ENCODE measurements at regions of chr7 and their contacts with region 1.

Region 1: DNA sequence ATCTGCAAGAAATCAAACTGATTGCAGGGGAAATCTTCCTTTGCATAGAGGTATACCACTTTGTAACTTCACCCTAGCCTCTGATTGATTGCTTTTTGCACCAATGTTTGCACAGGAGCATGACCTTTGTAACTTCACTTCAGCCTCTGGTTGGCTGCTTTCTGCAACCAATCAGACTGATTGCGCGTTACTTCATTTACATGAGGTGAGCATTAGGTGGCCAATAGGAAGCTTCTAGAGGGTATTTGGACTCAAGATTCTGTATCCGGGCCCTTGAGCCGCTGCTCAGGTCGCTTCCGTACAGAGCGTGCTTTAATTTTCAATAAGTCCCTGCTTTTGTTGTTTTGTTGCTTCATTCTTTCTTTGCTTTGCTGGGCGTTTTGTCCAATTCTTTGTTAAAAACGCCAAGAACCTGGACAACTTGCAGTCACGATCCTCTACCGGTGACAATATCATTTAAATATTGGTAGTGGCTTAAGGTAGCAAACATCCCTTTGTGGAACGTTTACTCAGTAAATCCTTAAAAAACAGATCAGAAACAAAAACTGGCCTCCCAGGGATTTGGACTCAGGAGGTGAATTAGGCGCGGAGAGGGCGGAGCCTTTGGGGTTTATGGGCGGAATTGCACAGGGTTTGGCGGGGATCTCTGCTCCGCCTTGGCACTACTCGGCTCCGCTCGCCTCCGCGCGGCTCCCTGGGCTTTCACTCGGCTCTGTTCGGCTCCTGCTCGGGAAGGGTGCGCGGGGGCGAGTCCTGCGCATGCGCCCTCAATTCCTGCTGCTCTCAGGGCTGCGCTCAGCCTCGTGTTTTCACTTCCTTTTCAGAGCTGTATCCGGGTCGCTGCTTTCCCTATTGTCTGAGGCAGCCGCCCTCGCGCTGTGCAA is at the start of gene PHF14:
- DNase-seq: peak; percentile 97
- ATAC-seq: peak; percentile 97
- H3K4me3 ChIP-seq: peak within 1 kb of the TSS; percentile 66 to 88 (median 85)
- H3K27ac ChIP-seq: peak within 1 kb of the TSS; percentile 99
- H3K4me1 ChIP-seq: peaks cover 42% of the 10 kb centered on the region
- H3K27me3 ChIP-seq: no peaks in the 10 kb centered on the region; a peak in 1 of 5 replicates
- CTCF ChIP-seq: no peak
- EP300 ChIP-seq: peak in 1 of 2 experiments; percentile 58; a peak in 2 of 4 replicates
- POLR2A ChIP-seq: peak; percentile 83 to 85
- RAD21 ChIP-seq: no peak
- total RNA-seq, gene PHF14: 68.7 and 70.9 TPM in 2 replicates

Region 2: GRCh38 chr7:10913457-10913856 is 59.8 kb before region 1 on chr7:
- CTCF ChIA-PET with region 1: no interaction called
- POLR2A ChIA-PET with region 1: no interaction called
- in situ Hi-C with region 1: no loop called
- intact Hi-C with region 1: no loop called
- DNase-seq: no peak
- ATAC-seq: no peak
- H3K4me3 ChIP-seq: no peak overlapping the region
- H3K27ac ChIP-seq: no peak overlapping the region
- H3K4me1 ChIP-seq: no peaks in the 10 kb centered on the region
- H3K27me3 ChIP-seq: no peaks in the 10 kb centered on the region
- CTCF ChIP-seq: no peak
- EP300 ChIP-seq: no peak
- POLR2A ChIP-seq: no peak
- RAD21 ChIP-seq: no peak

Region 3: DNA sequence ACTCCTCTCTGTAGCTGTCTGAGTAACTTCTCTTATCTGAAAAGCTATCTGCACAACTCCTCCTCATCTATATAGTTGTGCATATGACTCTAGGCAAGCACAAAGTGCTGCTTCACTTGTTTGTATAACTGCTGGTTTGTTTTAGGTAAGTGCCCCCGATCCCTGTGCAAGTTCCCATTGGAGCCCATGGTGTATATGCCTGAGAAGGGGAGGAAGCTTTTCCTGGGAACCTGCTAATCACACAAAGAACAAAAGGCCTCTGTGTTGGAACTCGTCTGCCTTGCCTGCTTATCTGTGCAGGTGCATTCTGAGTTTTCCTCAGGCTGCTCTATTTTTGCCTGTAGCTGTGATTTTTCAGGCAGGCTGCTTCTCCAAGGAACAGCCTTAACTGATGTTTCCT is 22.8 kb before region 1 on chr7:
- CTCF ChIA-PET with region 1: no interaction called
- POLR2A ChIA-PET with region 1: interaction called, 6 read pairs
- in situ Hi-C with region 1: no loop called
- intact Hi-C with region 1: loop called (anchors 1 kb)
- DNase-seq: peak; percentile 83
- ATAC-seq: peak; percentile 98
- H3K4me3 ChIP-seq: peak overlapping the region in 2 of 3 experiments; percentile 7 to 10; a peak in 2 of 6 replicates
- H3K27ac ChIP-seq: no peak overlapping the region
- H3K4me1 ChIP-seq: peaks cover 43% of the 10 kb centered on the region
- H3K27me3 ChIP-seq: no peaks in the 10 kb centered on the region
- CTCF ChIP-seq: no peak
- EP300 ChIP-seq: 0 out of 4 replicates have a peak, but pooled peaks of 1 of the 2 experiments have one; percentile 6
- POLR2A ChIP-seq: no peak
- RAD21 ChIP-seq: no peak

Region 4: DNA sequence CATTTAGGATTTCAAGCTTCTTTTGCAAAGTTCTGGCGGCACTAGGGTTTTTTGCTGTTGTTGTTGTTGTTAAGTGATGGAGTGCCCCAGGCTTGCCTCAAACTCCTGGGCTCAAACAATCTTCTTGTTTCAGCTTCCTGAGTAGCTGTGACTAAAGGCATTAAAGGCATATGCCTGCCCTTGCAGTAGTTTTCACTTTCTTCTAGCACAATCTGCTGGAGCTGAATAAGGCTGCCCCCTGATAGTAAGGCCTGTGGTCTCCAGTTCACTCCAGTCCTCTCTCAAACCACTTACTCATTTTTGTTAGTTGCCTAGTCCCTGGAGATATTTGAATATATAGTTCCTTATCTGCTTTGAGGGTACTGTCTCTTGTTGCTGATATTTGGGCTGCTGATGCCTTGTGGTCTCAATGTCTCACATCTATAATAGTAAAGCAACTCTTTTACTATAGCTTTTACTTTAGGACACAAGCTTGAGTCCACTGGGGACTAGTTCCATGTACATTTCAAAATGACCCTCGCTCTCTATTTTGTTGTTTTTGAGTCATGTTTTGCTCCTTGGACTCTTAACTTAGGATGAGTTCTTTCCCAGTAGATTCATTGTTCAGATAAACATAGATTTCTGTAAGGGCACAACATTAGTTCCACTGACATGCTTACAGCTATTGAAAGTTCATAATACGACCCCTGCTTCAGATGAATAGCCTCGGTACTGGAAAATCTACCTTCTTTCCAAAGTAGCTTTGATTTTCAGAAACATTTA is 25.9 kb after region 1 on chr7:
- CTCF ChIA-PET with region 1: no interaction called
- POLR2A ChIA-PET with region 1: interaction called, 27 read pairs
- in situ Hi-C with region 1: no loop called
- intact Hi-C with region 1: no loop called
- DNase-seq: peak; percentile 65
- ATAC-seq: peak; percentile 93
- H3K4me3 ChIP-seq: peak overlapping the region in 2 of 3 experiments; percentile 24 to 41; a peak in 2 of 6 replicates
- H3K27ac ChIP-seq: peak overlapping the region; percentile 64
- H3K4me1 ChIP-seq: peaks cover 51% of the 10 kb centered on the region
- H3K27me3 ChIP-seq: no peaks in the 10 kb centered on the region
- CTCF ChIP-seq: no peak
- EP300 ChIP-seq: no peak
- POLR2A ChIP-seq: no peak
- RAD21 ChIP-seq: no peak

Region 5: DNA sequence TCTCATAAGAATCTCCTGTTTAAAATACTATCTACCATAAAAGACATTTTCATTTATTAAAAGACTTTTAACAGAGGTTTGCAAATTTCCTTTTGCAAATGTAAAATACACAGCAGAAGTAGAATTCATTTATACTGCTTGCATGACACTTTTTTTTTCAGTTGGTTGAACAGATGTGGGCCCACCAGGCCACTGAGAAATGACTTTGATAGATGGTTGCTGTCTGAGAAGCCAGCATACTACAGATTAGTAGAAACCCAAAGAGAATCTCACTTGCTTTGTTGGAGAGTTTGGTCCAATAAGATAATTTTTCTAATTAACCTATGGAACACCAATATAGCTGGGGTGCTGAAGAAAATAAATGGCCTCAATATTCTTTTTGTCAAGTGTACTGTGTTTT is 66.7 kb after region 1 on chr7:
- CTCF ChIA-PET with region 1: no interaction called
- POLR2A ChIA-PET with region 1: no interaction called
- in situ Hi-C with region 1: no loop called
- intact Hi-C with region 1: loop called (anchors 2 kb)
- DNase-seq: no peak
- ATAC-seq: no peak
- H3K4me3 ChIP-seq: no peak overlapping the region
- H3K27ac ChIP-seq: no peak overlapping the region
- H3K4me1 ChIP-seq: no peaks in the 10 kb centered on the region
- H3K27me3 ChIP-seq: no peaks in the 10 kb centered on the region
- CTCF ChIP-seq: no peak
- EP300 ChIP-seq: no peak
- POLR2A ChIP-seq: no peak
- RAD21 ChIP-seq: no peak

Measured in HepG2 (cell line).